ENCODE measurements at regions of chr18 and their contacts with region 1.

Region 1: GRCh38 chr18:79528846-79529245 is 133.1 kb downstream of the NFATC1 start:
- DNase-seq: peak; percentile 84

Region 2: DNA sequence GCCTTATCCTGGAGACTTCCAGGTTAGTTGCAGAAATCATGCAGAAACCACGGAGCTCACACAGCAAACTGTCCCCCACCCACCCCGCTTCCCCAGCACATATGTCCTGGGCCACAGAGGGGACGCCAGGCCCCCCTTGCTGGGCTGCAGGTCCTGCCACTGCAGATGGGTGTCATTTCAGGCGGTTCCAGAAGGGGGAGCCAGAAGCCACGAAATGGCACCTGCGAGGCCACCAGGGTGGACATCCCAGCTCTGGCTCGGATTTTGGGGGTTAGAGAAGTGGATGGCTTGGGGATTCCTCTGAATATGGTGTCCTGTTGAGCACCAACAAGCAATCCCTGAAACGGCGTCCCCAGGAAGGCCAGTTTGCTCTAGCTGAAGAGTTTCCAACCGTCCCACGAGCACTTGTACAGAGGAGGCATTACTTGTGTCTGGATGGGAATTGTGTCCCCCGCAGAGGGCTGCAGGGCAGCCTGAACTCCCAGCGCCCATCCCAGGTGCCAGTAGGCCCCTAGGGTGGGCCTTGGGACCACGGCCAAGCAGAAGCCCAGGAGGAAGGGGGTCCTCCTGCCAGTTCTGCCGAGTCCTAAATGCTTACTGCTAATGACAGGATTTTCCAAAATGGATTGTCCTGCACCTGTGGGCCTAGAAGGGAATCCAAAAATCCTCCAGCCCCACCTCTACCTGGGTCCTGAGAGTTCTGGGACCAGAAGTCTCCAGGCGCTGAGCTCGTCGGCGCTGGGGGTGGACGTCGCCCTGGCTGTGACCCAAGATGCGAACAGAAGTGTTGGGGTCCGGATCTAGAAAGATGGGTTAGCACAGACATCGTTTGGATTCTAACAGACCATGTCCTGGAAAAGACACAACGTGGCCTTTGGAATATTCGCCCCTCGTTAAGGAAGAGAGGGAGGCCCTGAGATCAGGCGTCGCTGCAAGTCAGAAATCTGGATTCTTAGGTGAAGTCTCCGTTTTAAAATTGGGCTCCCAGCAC is 147.7 kb before region 1 on chr18:
- intact Hi-C with region 1: loop called (anchors 2 to 5 kb)
- DNase-seq: peak; percentile 88

Region 3: DNA sequence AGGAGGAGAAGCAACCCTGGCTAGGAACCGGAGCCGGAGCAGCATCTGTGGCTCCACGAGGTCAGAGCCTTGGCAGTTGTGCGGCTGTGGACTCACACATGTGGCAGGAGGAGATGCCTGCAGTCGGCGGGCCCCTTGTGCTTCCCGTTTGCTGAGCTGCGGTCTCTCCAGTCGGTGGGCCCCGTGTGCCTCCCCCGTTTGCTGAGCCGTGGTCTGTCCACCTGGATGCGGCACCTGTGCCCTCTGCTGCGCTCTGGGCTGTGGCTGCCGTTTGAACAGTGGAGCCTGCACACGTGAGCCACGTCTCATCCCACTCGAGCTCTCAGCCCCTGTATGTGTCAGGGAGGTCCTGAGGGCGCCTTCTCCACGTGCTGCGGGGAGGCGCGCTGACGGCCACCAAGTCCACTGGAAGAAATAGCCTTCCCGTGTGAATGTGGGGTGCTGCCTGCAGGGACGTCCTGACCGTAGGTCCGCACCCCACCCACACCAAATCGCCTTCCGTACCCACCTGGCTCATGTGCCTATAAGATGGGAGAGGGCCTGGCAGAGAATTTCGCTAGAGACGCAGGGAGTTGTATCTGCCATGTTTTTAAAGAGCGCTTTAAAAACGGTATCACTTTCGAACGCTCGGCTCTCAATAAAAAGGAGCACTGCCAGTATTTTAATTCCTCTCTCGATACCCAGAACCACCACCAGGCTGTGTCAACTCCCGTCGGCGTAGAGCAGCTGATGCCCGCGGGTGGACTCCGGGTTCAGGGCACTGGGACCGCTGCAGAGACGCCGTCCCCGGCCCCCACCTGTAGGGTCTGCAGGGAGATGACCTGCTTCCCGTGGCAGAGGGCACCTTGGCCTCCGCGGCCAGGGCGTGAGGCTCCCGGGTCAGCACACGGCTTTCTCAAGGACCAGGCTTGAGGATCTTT is 16.1 kb before region 1 on chr18:
- intact Hi-C with region 1: loop called in 1 of 2 experiments (anchors 1 kb)
- DNase-seq: peak; percentile 81

Region 4: DNA sequence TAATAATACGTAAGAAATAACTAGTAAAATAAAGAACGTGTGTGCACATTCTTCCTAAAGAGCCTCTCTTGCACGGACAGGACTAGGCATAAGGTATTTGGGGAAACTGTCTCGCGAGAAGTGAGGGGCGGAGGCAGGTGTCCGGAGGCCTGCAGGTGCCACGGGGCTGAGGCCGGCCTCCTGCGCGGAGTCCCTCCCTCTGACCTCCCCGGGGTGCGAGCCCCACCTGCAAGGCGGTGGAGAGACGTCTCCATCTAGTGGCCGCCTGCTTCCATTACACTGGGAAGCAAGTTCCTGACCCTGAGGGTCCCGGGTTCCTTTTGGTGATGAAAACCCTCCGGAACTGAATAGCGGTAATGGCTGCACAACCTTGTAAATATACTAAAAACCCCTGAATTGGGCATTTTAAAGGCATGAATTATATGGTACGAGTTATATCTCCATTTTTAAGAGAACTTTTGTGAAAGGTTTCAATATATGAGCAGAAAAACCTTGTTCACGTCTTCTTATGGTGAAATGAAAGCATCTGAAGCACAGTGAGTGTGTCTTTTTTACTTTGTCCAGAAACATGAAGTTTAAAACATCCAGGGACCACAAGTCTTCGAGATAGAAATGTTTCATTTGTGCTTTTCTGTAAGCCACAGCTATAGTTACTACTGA is 115.3 kb after region 1 on chr18:
- intact Hi-C with region 1: loop called (anchors 5 to 10 kb)
- DNase-seq: no peak